GM12878 (cell line): ENCODE measurements at regions of chr7 and their contacts with region 1.

Region 1: DNA sequence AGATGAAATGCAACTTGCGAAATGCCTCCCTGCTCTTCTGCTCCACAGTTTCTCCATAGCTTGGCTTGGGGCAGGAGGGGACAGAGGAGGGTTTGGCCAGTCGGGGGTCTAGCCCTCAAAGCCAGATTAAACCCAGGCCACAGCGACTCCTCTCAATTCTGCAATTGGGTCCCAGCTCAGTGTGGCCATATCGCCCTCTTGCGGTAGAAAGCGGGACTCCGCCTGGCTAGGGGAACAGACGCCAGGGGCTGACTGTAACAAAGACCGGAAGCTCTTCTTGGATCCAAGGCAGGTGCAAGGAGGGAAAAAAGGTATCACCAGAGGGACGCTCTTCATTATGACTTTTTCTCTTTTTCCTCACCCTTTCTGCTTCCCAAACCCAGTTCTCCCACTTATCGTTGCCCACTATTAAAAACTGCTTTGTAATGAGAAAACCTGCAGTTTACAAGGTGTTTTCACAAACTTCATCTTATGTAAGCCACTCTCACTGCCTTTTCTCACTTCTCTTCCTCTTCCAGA is 36.6 kb upstream of the TNPO3 start:
- DNase-seq: peak; percentile 62
- ATAC-seq: peak; percentile 87
- H3K4me3 ChIP-seq: no peak overlapping the region
- H3K27ac ChIP-seq: peak overlapping the region; percentile 48
- H3K4me1 ChIP-seq: peaks cover 40% of the 10 kb centered on the region
- H3K27me3 ChIP-seq: no peaks in the 10 kb centered on the region
- CTCF ChIP-seq: peak; percentile 98 to 99 (median 98); a peak in 5 of 6 replicates
- EP300 ChIP-seq: no peak
- POLR2A ChIP-seq: no peak
- RAD21 ChIP-seq: peak; percentile 99

Region 2: DNA sequence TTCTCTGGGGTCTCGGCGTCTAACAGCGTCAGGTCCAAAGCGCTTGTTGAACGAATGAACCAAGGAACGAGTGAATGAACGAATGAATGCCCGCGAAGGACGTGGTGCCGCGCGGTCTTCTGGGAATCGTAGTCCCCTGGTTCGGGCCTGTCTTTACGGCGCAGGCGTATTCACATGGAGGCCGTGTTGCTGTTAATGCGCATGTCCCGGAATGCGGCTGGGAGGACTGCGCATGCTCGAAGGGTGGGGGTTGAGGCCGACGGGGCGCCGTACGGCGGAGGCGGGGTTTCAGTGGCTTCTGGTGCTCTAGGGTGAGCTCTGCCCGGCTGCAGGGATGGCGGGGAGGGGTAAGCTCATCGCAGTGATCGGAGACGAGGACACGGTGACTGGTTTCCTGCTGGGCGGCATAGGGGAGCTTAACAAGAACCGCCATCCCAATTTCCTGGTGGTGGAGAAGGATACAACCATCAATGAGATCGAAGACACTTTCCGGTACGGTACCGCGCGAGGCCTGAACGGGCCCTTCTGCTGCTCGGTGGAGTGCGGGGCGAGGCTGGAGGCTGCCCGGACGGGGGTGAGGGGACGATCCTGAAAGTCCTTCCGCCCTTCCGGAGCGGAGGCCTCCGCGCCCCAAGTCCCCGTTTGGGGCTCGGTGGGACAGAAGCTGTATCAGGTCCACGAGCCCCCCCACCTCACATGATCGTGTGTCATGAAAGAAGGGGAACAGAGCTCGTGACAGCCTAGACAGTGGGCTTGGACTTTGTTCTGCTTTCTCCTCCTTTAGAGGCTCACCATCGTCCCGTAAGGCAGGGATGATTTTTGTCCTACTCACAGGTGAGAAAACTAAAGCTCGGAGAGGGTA is 228.7 kb before region 1 on chr7 and contains the start of gene ATP6V1F:
- CTCF ChIA-PET with region 1: interaction called, 26 read pairs
- POLR2A ChIA-PET with region 1: no interaction called
- RAD21 ChIA-PET with region 1: interaction called, 8 read pairs
- SMC1A ChIA-PET with region 1: interaction called, 7 read pairs
- in situ Hi-C with region 1: no loop called
- intact Hi-C with region 1: loop called (anchors 2 kb)
- DNase-seq: peak; percentile 97
- ATAC-seq: peak; percentile 93
- H3K4me3 ChIP-seq: peak within 1 kb of the TSS; percentile 84
- H3K27ac ChIP-seq: peak within 1 kb of the TSS; percentile 62
- H3K4me1 ChIP-seq: peaks cover 8% of the 10 kb centered on the region; the same call in 1 of the 2 replicates
- H3K27me3 ChIP-seq: no peaks in the 10 kb centered on the region
- CTCF ChIP-seq: no peak
- EP300 ChIP-seq: no peak
- POLR2A ChIP-seq: peak; percentile 90
- RAD21 ChIP-seq: no peak
- polyA plus RNA-seq, gene ATP6V1F: 246 to 343 TPM

Region 3: GRCh38 chr7:128933180-128933891 is 158.2 kb before region 1 on chr7:
- CTCF ChIA-PET with region 1: interaction called, 10 read pairs
- POLR2A ChIA-PET with region 1: interaction called, 3 read pairs
- RAD21 ChIA-PET with region 1: interaction called, 5 read pairs
- SMC1A ChIA-PET with region 1: interaction called, 12 read pairs
- in situ Hi-C with region 1: no loop called
- intact Hi-C with region 1: no loop called
- DNase-seq: peak; percentile 71
- ATAC-seq: peak; percentile 59
- H3K4me3 ChIP-seq: peak overlapping the region; percentile 50
- H3K27ac ChIP-seq: peak overlapping the region; percentile 96
- H3K4me1 ChIP-seq: peaks cover 44% of the 10 kb centered on the region
- H3K27me3 ChIP-seq: no peaks in the 10 kb centered on the region
- CTCF ChIP-seq: no peak
- EP300 ChIP-seq: no peak; a peak in 1 of 4 replicates
- POLR2A ChIP-seq: peak; percentile 73
- RAD21 ChIP-seq: no peak

Region 4: DNA sequence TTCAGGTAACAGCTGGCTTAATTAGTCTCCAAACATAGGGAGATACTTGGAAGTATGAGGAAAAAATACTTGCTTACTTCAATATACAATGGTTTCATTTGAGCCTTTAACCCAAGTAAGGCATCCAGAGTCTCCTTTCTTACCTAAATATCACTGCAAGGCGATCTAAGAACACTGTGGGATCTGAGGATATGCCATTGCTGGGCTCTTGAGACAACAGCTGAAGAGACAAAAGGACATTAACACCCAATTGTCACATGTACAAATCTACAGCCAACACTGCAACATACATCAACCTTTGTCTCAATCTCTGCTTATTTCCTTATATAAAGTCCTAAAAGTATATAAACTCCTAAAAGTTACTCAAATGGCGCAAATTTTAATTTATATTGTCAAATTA is 109.4 kb before region 1 on chr7:
- CTCF ChIA-PET with region 1: interaction called, 13 read pairs
- POLR2A ChIA-PET with region 1: no interaction called
- RAD21 ChIA-PET with region 1: interaction called, 6 read pairs
- SMC1A ChIA-PET with region 1: interaction called, 5 read pairs
- in situ Hi-C with region 1: no loop called
- intact Hi-C with region 1: no loop called
- DNase-seq: no peak
- ATAC-seq: no peak
- H3K4me3 ChIP-seq: no peak overlapping the region
- H3K27ac ChIP-seq: no peak overlapping the region
- H3K4me1 ChIP-seq: no peaks in the 10 kb centered on the region
- H3K27me3 ChIP-seq: no peaks in the 10 kb centered on the region
- CTCF ChIP-seq: no peak
- EP300 ChIP-seq: no peak
- POLR2A ChIP-seq: no peak
- RAD21 ChIP-seq: no peak

Region 5: DNA sequence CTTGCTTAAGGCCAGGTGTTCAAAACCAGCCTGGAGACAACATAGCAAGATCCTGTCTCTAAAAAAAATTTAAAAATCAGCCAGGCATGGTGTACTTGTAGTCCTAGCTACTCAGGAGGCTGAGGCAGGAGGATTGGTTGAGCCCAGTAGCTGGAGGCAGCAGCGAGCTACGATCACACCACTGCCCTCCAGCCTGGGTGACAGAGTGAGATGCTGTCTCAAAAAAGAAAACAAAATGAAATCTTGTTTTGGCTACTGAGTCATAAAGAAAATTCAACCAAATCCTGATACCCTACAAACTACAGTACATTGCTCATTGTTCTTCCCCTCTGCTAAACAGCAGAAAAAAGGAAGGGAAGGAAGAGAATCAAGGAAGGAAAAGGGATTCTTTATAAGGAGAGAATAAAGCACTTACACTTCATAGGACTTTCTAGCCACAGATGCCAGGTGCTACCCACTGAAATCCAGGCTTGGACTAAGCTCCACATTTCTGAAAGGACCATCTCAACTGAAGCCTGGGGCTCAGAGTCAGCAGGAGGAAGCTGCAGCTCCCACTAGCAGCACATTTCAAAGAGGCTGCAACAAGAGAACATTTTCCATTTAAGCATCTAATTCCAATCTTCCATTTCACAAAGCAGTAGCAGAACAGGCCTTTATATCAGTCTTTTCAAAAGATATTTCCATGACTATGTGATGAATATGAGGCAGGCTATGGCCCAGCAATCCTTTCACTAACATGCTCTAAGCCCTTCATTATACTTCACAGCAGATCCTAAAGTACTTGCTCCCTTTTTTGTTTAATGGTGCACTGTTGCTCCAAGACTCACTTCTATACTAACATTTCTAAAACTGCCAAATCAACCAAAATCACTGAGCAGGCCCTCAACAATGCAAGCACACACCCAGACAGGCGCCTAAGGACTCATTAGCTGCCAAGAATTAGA is 50.1 kb before region 1 on chr7:
- CTCF ChIA-PET with region 1: interaction called, 13 read pairs
- POLR2A ChIA-PET with region 1: no interaction called
- RAD21 ChIA-PET with region 1: interaction called, 16 read pairs
- SMC1A ChIA-PET with region 1: interaction called, 13 read pairs
- in situ Hi-C with region 1: no loop called
- intact Hi-C with region 1: no loop called
- DNase-seq: no peak
- ATAC-seq: peak; percentile 44
- H3K4me3 ChIP-seq: no peak overlapping the region
- H3K27ac ChIP-seq: peak overlapping the region; percentile 10; the same call in 1 of the 2 replicates
- H3K4me1 ChIP-seq: peaks cover 38% of the 10 kb centered on the region
- H3K27me3 ChIP-seq: no peaks in the 10 kb centered on the region
- CTCF ChIP-seq: no peak
- EP300 ChIP-seq: no peak
- POLR2A ChIP-seq: no peak
- RAD21 ChIP-seq: no peak

Region 6: DNA sequence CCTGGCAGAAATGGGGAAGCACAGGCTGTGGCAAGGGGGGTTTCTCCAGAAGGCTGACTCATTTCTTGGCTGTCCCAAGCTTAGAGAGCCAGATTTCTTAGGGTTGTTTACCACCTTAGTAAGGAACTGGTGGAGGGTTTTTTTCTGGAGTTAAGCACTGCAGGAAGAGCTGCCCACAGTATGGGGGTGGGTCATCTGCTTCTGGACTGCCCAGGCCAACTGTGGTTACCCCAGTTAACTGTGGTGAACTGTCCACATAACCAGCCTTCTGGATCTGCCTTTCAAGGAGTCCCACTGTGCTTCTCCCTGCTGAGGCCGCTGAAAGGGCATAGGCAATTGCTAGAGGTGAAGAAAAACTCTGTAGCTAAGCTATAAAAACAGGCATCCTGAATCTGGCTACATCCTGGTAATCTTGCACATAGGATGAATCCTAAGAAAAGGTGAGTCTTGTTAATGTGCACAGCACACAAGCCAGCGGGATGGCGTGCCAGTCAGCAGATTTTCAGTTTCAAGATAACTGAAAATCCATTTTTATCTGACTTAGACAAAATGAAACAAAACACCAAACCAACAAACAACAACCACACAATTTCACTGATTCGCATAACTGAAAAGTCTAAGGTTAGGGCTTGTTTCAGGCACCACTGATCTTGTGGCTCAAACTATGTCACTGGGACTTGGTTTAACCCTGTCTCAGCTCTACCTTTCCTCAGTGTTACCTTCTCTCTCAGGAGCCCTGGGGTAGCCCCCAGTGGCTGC is 31.4 kb after region 1 on chr7:
- CTCF ChIA-PET with region 1: interaction called, 11 read pairs
- POLR2A ChIA-PET with region 1: no interaction called
- RAD21 ChIA-PET with region 1: interaction called, 11 read pairs
- SMC1A ChIA-PET with region 1: interaction called, 5 read pairs
- in situ Hi-C with region 1: no loop called
- intact Hi-C with region 1: loop called (anchors 1 kb)
- DNase-seq: peak; percentile 95
- ATAC-seq: peak; percentile 91
- H3K4me3 ChIP-seq: peak overlapping the region; percentile 43
- H3K27ac ChIP-seq: peak overlapping the region; percentile 96
- H3K4me1 ChIP-seq: peaks cover 36% of the 10 kb centered on the region
- H3K27me3 ChIP-seq: no peaks in the 10 kb centered on the region
- CTCF ChIP-seq: no peak
- EP300 ChIP-seq: peak; percentile 98
- POLR2A ChIP-seq: no peak
- RAD21 ChIP-seq: no peak

Region 7: GRCh38 chr7:129210256-129210988 is 118.9 kb after region 1 on chr7:
- CTCF ChIA-PET with region 1: interaction called, 53 read pairs
- POLR2A ChIA-PET with region 1: no interaction called
- RAD21 ChIA-PET with region 1: interaction called, 8 read pairs
- SMC1A ChIA-PET with region 1: interaction called, 8 read pairs
- in situ Hi-C with region 1: no loop called
- intact Hi-C with region 1: loop called (anchors 2 kb)
- DNase-seq: no peak
- ATAC-seq: peak; percentile 97
- H3K4me3 ChIP-seq: no peak overlapping the region
- H3K27ac ChIP-seq: no peak overlapping the region
- H3K4me1 ChIP-seq: no peaks in the 10 kb centered on the region
- H3K27me3 ChIP-seq: no peaks in the 10 kb centered on the region
- CTCF ChIP-seq: peak; percentile 86 to 94 (median 91)
- EP300 ChIP-seq: no peak
- POLR2A ChIP-seq: no peak
- RAD21 ChIP-seq: peak; percentile 97

Region 8: DNA sequence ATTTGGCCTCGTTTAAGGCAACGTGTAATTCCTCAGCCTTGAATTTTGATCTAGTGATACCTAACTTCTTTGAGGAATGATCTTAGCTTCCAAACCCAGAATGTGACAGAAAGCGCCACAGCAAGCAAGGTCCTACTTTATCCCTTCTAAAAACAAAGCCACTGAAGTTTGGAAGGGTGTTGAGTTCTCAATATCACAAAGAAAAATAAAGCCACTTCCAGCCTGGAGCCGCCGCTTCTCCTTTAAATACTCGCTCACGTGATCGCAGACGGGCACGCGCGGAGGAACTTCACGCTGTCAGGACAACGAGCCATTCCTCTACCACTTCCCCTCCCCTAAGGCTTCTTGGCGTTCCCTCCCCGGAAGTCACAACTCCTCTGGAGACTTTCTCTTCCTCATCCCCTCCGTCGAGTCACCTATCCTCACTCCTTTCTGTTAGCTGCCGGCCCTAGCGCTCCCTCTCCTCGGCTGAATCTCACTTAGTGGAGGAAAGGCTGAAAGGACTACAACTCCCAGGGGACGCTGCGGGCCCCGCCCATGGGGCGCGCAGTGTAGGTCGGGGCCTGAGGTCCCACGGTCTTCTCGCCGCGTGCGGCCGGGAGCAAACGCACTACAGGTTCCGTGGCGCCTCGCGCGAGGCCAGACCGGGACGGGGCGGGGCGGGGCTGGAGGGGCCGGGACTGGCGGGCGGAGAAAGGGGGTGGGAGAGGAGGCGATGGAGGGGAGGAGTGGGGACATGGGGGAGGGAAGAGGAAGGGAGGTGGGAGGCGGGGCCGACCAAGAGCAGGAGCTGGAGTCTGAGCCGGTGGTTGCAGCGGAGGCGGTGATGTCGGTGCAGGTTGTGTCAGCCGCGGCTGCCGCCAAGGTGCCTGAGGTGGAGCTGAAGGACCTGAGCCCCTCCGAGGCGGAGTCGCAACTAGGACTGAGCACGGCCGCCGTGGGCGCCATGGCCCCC is 133.0 kb after region 1 on chr7 and contains the start of gene AHCYL2:
- CTCF ChIA-PET with region 1: no interaction called
- POLR2A ChIA-PET with region 1: no interaction called
- RAD21 ChIA-PET with region 1: no interaction called
- SMC1A ChIA-PET with region 1: no interaction called
- in situ Hi-C with region 1: no loop called
- intact Hi-C with region 1: no loop called
- DNase-seq: peak; percentile 89
- ATAC-seq: peak; percentile 97
- H3K4me3 ChIP-seq: peak within 1 kb of the TSS; percentile 72
- H3K27ac ChIP-seq: peak within 1 kb of the TSS; percentile 71
- H3K4me1 ChIP-seq: peaks cover 8% of the 10 kb centered on the region; the same call in 1 of the 2 replicates
- H3K27me3 ChIP-seq: no peaks in the 10 kb centered on the region
- CTCF ChIP-seq: no peak
- EP300 ChIP-seq: no peak
- POLR2A ChIP-seq: peak; percentile 90
- RAD21 ChIP-seq: no peak
- polyA plus RNA-seq, gene AHCYL2: 1.7 to 2.0 TPM

Region 9: GRCh38 chr7:129522088-129522970 is 430.8 kb after region 1 on chr7:
- CTCF ChIA-PET with region 1: no interaction called
- POLR2A ChIA-PET with region 1: no interaction called
- RAD21 ChIA-PET with region 1: no interaction called
- SMC1A ChIA-PET with region 1: no interaction called
- in situ Hi-C with region 1: no loop called
- intact Hi-C with region 1: no loop called
- DNase-seq: no peak
- ATAC-seq: no peak; the same call in 2 of the 3 replicates
- H3K4me3 ChIP-seq: no peak overlapping the region
- H3K27ac ChIP-seq: no peak overlapping the region
- H3K4me1 ChIP-seq: no peaks in the 10 kb centered on the region
- H3K27me3 ChIP-seq: no peaks in the 10 kb centered on the region; a peak in 1 of 4 replicates
- CTCF ChIP-seq: no peak
- EP300 ChIP-seq: no peak
- POLR2A ChIP-seq: no peak
- RAD21 ChIP-seq: no peak